PC-3 (cell line): ENCODE measurements at regions of chr4 and their contacts with region 1.

Region 1: GRCh38 chr4:168408620-168409019 is 71.7 kb downstream of the DDX60L start:
- DNase-seq: peak; percentile 86
- ATAC-seq: peak; percentile 91
- H3K4me3 ChIP-seq: 0 out of 2 replicates have a peak overlapping the region, but pooled peaks have one; percentile 14
- H3K27ac ChIP-seq: peak overlapping the region; percentile 80
- H3K4me1 ChIP-seq: peaks cover 20% of the 10 kb centered on the region
- H3K27me3 ChIP-seq: no peaks in the 10 kb centered on the region
- CTCF ChIP-seq: no peak

Region 2: GRCh38 chr4:168101026-168101425 is 307.6 kb before region 1 on chr4:
- CTCF ChIA-PET with region 1: no interaction called
- POLR2A ChIA-PET with region 1: no interaction called
- intact Hi-C with region 1: no loop called
- DNase-seq: no peak
- ATAC-seq: no peak
- H3K4me3 ChIP-seq: no peak overlapping the region
- H3K27ac ChIP-seq: no peak overlapping the region
- H3K4me1 ChIP-seq: peaks cover 34% of the 10 kb centered on the region
- H3K27me3 ChIP-seq: no peaks in the 10 kb centered on the region
- CTCF ChIP-seq: no peak

Region 3: DNA sequence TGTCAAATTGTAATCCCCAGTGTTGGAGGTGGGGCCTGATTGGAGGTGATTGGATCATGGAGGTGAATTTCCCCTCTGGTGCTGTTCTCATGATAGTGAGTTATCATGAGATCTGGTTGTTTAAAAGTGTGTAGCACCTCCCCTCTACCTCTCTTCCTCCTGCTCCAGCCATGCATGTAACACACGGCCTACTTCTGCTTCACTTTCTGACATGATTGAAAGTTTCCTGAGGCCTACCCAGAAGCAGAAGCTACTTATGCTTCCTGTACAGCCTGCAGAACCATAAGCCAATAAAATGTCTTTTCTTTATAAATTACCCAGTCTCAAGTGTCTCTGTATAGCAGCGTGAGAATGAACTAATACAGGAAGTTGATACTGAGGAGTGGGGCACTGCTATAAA is 28.3 kb before region 1 on chr4:
- CTCF ChIA-PET with region 1: no interaction called
- POLR2A ChIA-PET with region 1: interaction called, 11 read pairs
- intact Hi-C with region 1: no loop called
- DNase-seq: no peak
- ATAC-seq: no peak
- H3K4me3 ChIP-seq: no peak overlapping the region
- H3K27ac ChIP-seq: no peak overlapping the region
- H3K4me1 ChIP-seq: no peaks in the 10 kb centered on the region
- H3K27me3 ChIP-seq: no peaks in the 10 kb centered on the region
- CTCF ChIP-seq: no peak

Region 4: GRCh38 chr4:168461821-168462220 is 53.2 kb after region 1 on chr4:
- CTCF ChIA-PET with region 1: no interaction called
- POLR2A ChIA-PET with region 1: interaction called, 10 read pairs
- intact Hi-C with region 1: no loop called
- DNase-seq: no peak
- ATAC-seq: no peak
- H3K4me3 ChIP-seq: no peak overlapping the region
- H3K27ac ChIP-seq: no peak overlapping the region
- H3K4me1 ChIP-seq: no peaks in the 10 kb centered on the region
- H3K27me3 ChIP-seq: no peaks in the 10 kb centered on the region
- CTCF ChIP-seq: no peak

Region 5: DNA sequence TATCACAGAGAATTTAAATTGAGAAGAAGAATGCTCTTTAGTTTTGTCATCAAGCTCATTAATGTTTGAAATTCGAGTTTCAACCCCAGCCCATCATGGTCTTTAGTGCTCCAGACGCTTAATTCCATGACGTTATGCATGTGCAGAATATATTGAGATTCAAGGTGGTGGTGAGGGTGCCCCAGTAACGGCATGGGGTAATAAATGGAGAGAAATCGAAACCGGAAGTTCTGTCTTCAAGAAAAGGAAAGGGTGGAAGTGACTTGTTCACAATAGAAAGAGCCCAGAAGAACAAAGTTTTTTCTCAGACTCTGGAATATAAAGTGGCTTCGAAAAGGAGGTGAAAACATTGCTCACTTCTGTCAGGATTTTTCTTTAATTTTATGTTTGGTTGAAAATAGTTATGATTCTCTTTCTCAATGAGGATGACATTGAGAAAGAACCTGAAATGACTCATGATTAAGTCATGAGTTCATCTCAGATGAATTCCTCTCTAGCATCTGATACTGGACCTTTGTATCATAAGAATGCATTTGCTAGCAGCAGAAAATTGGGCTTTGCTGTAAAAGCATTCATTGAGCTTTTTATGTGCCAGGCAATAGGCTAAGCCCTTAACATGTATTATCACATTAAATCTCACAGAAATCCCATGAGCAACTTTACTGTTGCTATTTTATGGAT is 72.5 kb after region 1 on chr4:
- CTCF ChIA-PET with region 1: no interaction called
- POLR2A ChIA-PET with region 1: interaction called, 5 read pairs
- intact Hi-C with region 1: loop called (anchors 5 kb)
- DNase-seq: peak; percentile 82
- ATAC-seq: peak; percentile 27
- H3K4me3 ChIP-seq: peak overlapping the region; percentile 89
- H3K27ac ChIP-seq: peak overlapping the region; percentile 94
- H3K4me1 ChIP-seq: peaks cover 54% of the 10 kb centered on the region
- H3K27me3 ChIP-seq: no peaks in the 10 kb centered on the region
- CTCF ChIP-seq: no peak

Region 6: DNA sequence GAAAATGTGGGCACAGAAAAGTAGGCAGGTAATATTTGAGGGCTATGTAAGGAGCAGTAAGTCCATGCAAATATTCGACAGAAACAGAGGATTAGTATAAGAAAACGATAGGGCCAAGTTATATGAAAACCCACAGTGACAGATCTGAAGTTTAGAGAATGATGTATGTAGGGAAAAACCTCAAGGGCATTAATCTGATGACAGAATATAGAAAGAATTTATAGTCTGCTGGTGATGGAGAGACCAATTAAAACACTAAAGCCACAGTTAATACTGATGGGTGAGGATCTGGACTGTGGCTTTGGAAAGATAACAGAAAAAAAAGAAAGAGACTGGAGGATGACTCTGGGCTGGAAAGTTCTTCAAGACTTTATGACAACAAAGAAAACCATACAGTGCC is 257.9 kb after region 1 on chr4:
- CTCF ChIA-PET with region 1: no interaction called
- POLR2A ChIA-PET with region 1: no interaction called
- intact Hi-C with region 1: no loop called
- DNase-seq: peak; percentile 75
- ATAC-seq: peak; percentile 83
- H3K4me3 ChIP-seq: no peak overlapping the region
- H3K27ac ChIP-seq: peak overlapping the region; percentile 62
- H3K4me1 ChIP-seq: peaks cover 57% of the 10 kb centered on the region
- H3K27me3 ChIP-seq: no peaks in the 10 kb centered on the region
- CTCF ChIP-seq: no peak

Region 7: DNA sequence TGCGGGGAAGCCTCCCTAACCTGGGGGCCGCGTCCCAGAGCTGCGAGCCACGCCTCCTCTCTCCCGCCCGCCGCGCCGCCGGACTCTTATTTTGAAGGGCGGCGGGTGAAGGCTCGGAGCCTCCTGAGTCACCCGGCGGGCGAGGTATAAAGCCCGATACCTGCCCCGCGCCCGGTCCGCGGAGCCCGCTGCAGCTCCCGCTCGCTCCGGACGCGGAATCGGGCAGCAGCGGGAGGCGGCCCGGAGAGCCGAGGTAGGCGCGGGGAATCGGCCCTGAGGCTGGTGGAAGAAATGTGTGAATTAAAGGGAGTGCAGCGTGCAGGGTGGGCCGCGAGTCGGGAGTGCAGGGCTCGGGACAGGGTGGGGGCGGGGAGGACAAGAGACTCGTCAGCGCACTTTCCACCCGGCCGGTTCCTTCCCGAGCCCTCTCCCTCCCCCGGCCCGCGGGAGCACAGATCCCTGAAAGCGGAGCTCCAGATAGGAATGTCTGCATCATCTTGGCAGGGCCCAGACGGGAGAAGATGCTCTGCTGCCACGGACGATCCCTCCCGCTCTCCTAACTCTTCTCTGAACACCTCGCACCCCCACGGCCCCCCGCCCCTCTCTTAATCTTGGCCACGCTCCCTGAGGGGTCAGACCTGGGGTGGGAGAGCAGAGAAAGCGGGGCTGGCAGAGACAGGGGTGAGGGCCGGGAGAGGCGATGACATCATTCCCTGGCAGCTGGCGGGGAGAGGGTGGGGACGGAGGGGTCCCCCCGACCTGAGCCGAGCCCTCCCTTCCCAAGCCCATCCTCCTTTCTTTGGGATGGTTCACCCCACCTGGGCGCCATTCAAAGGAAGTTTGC is 423.5 kb after region 1 on chr4:
- CTCF ChIA-PET with region 1: no interaction called
- POLR2A ChIA-PET with region 1: no interaction called
- intact Hi-C with region 1: no loop called
- DNase-seq: peak; percentile 78
- ATAC-seq: peak; percentile 80
- H3K4me3 ChIP-seq: peak overlapping the region; percentile 96
- H3K27ac ChIP-seq: peak overlapping the region; percentile 44
- H3K4me1 ChIP-seq: peaks cover 21% of the 10 kb centered on the region; the same call in 1 of the 2 replicates
- H3K27me3 ChIP-seq: no peaks in the 10 kb centered on the region
- CTCF ChIP-seq: no peak